Transverse colon (tissue), 4 donors: ENCODE measurements at regions of chr2 and their contacts with region 1.

Region 1: GRCh38 chr2:98412751-98413458 is 31.8 kb upstream of the INPP4A start:
- DNase-seq: peak; percentile 48
- H3K4me3 ChIP-seq: no peak overlapping the region
- H3K27ac ChIP-seq: no peak overlapping the region
- H3K4me1 ChIP-seq: no peaks in the 10 kb centered on the region
- H3K27me3 ChIP-seq: no peaks in the 10 kb centered on the region
- CTCF ChIP-seq: peak; percentile 75 to 80 (median 76)
- EP300 ChIP-seq: no peak
- POLR2A ChIP-seq: no peak

Region 2: DNA sequence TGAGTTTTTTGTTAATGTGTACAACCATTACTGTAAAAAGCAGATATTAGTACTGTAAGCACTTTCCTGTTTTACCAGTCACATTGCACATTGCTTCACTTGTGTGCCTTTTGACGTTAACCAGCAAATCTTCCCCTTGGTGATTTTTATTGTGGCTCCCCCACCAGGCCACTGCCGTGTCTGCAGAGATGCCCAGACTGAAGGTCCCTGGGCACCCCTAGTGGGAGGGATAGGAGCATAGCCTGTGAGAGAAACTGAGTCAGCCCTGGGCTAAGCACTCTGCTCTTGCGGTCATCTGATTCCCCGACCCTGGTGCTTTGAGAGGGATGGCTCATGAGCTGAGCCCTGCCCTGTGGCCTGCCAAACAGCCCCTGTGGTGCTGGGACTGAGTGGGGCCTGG is 105.2 kb after region 1 on chr2:
- in situ Hi-C with region 1: loop called in 1 of 4 experiments (anchors 25 kb)
- intact Hi-C with region 1: no loop called
- DNase-seq: peak; percentile 47
- H3K4me3 ChIP-seq: no peak overlapping the region
- H3K27ac ChIP-seq: no peak overlapping the region
- H3K4me1 ChIP-seq: peaks cover 7 to 19% (median 13%) of the 10 kb centered on the region in 4 donors
- H3K27me3 ChIP-seq: no peaks in the 10 kb centered on the region
- CTCF ChIP-seq: peak in 3 of 5 experiments; percentile 28 to 35 (median 35)
- EP300 ChIP-seq: no peak
- POLR2A ChIP-seq: no peak

Region 3: GRCh38 chr2:98568881-98569793 is 156.2 kb after region 1 on chr2:
- in situ Hi-C with region 1: loop called in 1 of 4 experiments (anchors 25 kb)
- intact Hi-C with region 1: no loop called
- DNase-seq: peak; percentile 57
- H3K4me3 ChIP-seq: no peak overlapping the region
- H3K27ac ChIP-seq: no peak overlapping the region
- H3K4me1 ChIP-seq: peaks cover 0 to 9% (median 1%) of the 10 kb centered on the region in 4 donors
- H3K27me3 ChIP-seq: no peaks in the 10 kb centered on the region
- CTCF ChIP-seq: peak; percentile 73 to 93 (median 88)
- EP300 ChIP-seq: no peak
- POLR2A ChIP-seq: no peak

Region 4: GRCh38 chr2:98598779-98599428 is 186.0 kb after region 1 on chr2:
- in situ Hi-C with region 1: loop called in 3 of 4 experiments (anchors 10 to 25 kb)
- intact Hi-C with region 1: no loop called
- DNase-seq: no peak
- H3K4me3 ChIP-seq: no peak overlapping the region
- H3K27ac ChIP-seq: no peak overlapping the region
- H3K4me1 ChIP-seq: no peaks in the 10 kb centered on the region
- H3K27me3 ChIP-seq: no peaks in the 10 kb centered on the region
- CTCF ChIP-seq: no peak
- EP300 ChIP-seq: no peak
- POLR2A ChIP-seq: no peak

Region 5: DNA sequence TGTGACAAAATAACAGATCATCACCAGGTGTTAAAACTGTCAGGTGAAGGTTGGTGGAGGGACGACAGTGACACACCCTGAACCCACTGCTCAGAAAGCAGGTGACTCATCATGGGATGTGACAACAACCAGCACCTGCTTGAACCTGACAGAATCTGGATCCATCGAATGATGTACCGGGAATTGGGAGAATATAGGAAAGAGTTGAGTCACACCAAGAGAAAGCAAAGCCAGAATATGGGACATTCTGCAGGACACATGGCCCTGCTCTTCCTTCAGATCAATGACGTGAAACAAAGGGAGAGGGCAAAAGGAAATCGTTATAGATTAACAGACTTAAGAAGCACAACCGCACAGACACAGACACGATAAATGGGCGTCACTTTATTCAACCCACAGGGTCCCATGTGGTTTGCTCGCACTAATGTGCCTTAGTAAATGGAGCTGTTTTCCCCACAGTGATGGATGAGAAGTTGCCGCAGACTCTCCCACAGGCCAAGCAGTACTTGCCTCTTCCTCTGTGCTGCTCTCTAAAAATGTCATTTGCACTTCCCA is 423.0 kb after region 1 on chr2:
- in situ Hi-C with region 1: loop called (anchors 25 kb)
- intact Hi-C with region 1: no loop called
- DNase-seq: no peak
- H3K4me3 ChIP-seq: no peak overlapping the region
- H3K27ac ChIP-seq: no peak overlapping the region
- H3K4me1 ChIP-seq: peaks cover 0 to 7% (median 0%) of the 10 kb centered on the region in 4 donors
- H3K27me3 ChIP-seq: no peaks in the 10 kb centered on the region
- CTCF ChIP-seq: no peak
- EP300 ChIP-seq: no peak
- POLR2A ChIP-seq: no peak

Region 6: DNA sequence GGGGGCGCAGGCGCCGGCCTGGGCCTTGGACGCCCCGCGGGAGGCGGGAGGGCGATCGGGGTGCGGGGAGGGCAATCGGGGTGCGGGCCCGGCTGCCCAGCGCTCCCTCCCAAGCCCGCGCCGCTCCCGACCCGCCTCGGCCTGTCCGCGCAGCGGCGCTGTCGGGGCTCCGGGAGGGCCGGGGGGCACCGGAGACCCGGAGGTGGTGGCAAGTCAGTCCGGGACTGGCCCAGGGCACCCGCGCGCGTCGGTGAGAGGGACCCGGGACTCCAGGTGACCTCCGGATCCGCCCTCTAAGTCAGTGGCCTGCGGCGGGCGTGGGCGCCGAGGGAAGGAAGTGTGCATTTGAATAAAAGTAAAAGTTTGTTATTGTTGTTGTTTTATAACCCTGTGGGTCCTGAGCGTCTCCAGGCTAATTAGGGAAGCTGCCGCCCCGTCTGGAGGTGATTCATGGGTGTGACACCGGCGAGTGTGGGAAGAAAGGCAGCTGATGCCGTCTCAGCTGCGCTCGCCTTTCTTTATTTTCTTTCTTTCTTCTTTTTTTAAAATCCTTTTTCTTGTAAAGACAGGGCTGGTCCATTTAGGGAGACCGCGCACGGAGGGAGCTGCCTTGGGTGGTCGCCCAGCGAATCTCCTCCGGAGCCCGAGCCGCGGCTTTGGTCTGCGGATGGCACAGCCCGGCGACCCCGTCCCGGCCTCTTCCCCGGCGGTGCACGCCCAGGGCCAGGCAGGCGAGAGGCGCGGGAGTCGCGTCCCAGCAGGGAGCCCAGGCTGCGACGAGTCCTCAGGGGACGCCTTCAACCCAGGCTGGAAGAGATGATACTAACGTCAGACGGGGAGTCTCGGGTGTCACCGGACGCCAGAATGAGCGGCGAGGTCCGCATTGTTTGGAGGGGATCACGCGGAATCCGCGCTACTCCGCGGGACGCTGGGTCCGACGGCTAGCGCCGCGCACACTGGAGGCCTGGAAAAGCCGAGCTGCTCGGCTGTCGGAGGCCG is 523.7 kb after region 1 on chr2:
- in situ Hi-C with region 1: no loop called
- intact Hi-C with region 1: no loop called
- DNase-seq: no peak
- H3K4me3 ChIP-seq: peak overlapping the region; percentile 5 to 51 (median 40)
- H3K27ac ChIP-seq: no peak overlapping the region
- H3K4me1 ChIP-seq: peaks cover 0 to 17% (median 15%) of the 10 kb centered on the region in 4 donors
- H3K27me3 ChIP-seq: peaks cover 66% of the 10 kb centered on the region
- CTCF ChIP-seq: peak in 1 of 5 experiments; percentile 6
- EP300 ChIP-seq: no peak
- POLR2A ChIP-seq: no peak